ENCODE measurements at regions of chr1 and their contacts with region 1.

Region 1: DNA sequence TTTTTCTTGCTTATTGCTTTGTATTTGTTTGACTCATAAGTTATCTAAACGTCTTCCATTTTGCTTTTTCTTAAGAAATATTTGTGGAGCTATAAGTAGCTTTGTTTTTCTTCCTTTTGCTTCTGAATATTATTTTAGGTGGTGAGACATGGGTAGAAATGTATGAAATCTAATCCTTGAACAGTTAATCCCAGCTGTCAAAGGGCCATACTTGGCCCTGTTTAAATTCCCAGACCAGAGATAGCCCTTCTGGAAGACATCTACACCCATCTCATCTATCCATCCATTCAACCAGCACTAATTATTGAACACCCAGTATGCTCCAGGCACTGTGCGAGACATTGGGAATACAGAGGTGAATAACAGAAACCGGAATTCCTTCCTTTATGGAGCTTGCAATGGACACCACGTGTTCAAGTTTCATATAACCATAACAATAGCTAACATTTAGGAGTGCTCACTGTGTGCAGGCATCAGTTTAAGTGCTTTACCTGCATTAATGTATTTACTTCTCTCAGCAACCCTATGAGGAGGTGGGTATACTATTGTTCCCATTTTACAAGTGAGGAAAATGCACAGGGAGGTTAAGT is 8.7 kb downstream of the TACSTD2 start:
- H3K4me3 ChIP-seq: no peak overlapping the region
- H3K27ac ChIP-seq: no peak overlapping the region
- H3K4me1 ChIP-seq: no peaks in the 10 kb centered on the region
- CTCF ChIP-seq: no peak

Region 2: DNA sequence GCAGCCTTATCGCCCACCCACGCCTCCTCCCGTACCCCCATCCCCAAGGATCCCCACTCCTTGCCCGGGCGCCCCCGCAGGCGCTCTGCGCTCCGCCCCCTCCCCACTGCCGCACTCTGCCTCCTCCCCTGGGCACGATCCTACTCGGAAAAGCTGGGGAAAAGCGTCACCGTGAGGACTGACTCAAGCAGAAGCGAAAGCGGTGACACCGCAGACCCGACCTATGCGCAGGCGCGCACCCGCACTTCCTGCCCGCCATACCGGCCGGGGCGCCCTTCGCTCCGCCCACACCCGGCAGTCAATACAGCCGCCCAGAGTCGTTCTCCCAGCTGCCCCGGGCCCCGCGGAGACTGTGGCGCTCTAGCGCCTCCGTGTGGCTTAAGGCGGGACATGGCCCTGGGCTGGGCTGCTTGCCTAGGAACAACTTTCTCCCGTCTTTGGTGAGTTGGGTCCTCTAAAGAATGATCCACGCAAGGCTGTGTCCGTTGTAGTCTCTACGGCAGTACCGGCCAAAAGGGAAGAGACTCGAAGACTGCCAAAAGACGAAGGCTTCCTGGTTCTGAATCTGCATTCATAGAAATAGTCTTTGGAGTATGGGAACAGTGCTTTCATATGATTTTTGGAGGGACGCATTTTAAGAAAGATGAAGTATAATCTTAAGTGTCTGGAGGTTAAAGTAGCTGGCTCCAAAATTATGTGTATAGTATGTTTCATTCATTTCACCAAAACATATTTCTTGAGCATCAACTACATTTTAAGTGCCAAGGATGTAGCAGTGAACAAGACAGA is 21.7 kb before region 1 on chr1 and contains the start of gene OMA1:
- CTCF ChIA-PET with region 1: interaction called, 14 read pairs
- POLR2A ChIA-PET with region 1: no interaction called
- H3K4me3 ChIP-seq: peak within 1 kb of the TSS; percentile 79
- H3K27ac ChIP-seq: peak within 1 kb of the TSS; percentile 58
- H3K4me1 ChIP-seq: no peaks in the 10 kb centered on the region
- CTCF ChIP-seq: peak; percentile 98